ENCODE measurements at regions of chr13 and their contacts with region 1.

Region 1: DNA sequence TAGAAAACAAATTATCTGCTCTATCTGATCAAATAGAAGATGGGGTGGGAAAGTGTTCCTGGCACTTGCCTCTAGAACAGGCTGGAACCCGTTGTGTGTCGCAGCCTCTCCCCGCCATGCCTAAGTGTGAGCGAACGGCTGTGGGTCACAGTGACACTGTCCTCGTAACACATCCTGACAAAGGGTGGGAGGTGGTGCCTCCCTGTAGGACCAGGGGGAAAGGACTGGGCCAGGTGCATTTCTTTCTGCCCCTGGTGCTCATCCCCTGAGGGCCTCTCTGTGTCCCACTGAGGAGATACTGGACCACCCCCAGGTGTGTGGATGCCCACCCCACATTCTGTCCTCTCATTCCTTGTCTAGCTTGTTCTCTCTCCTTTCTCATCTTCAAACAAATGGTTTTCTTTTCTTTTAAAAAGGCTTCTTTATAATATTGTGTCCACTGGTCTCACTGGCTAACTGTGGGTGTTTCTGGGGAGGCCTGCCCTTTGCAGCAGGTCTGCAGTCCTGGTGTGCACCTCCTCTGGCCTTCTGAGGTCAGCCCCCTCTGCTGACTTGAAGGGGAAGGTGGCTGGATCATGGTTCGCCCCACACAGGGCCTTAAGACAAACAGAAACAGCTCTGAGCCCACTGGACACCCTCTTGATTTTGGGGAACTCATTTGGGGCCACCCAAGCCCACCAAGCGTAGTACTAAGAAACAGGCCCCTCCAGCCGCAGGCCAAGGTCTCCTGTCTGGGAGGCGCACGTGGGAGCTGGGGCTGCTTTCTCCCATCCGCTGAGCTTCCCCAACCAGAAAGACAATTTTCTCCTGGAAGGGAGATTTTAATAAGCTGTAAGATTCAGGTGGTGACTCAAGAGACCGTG is 152.5 kb upstream of the SOX1 start:
- DNase-seq: peak; percentile 52

Region 2: GRCh38 chr13:111292710-111293485 is 621.6 kb before region 1 on chr13:
- intact Hi-C with region 1: loop called in 1 of 2 experiments (anchors 5 kb)
- DNase-seq: no peak

Region 3: DNA sequence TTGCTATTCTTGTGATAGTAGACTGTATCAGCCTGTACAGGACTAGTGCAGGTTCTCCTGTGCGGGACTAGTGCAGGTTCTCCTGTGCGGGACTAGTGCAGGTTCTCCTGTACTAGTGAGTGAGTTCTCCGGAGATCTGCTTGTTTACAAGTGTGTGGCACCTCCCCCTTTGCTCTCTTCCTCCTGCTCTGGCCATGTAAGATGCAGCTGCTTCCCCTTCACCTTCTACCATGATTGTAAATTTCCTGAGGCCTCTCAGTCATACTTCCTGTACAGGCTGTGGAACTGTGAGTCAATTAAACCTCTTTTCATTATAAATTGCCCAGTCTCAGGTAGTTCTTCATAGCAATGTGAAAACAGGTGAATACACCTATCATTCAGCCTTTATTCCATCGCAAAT is 304.4 kb before region 1 on chr13:
- intact Hi-C with region 1: no loop called
- DNase-seq: no peak

Measured in posterior vena cava (tissue), 2 donors.